Activated CD8-positive, alpha-beta T cell treated with anti-CD3 and anti-CD28 coated beads for 36 hours (primary cell): ENCODE measurements at regions of chr2 and their contacts with region 1.

Region 1: GRCh38 chr2:95121407-95122196 is at the start of gene MRPS5:
- DNase-seq: peak; percentile 90
- ATAC-seq: peak; percentile 97
- H3K4me3 Mint-ChIP-seq: peak within 1 kb of the TSS; percentile 82
- H3K27ac Mint-ChIP-seq: peak within 1 kb of the TSS; percentile 93
- H3K4me1 Mint-ChIP-seq: peaks cover 37% of the 10 kb centered on the region
- H3K27me3 Mint-ChIP-seq: no peaks in the 10 kb centered on the region
- CTCF ChIP-seq: no peak
- total RNA-seq, gene MRPS5: 93.0 to 96.1 TPM

Region 2: GRCh38 chr2:95091885-95092555 is 29.6 kb before region 1 on chr2:
- CTCF ChIA-PET with region 1: no interaction called
- POLR2A ChIA-PET with region 1: no interaction called
- intact Hi-C with region 1: no loop called
- DNase-seq: no peak
- ATAC-seq: no peak
- H3K4me3 Mint-ChIP-seq: no peak overlapping the region
- H3K27ac Mint-ChIP-seq: no peak overlapping the region
- H3K4me1 Mint-ChIP-seq: peaks cover 27% of the 10 kb centered on the region
- H3K27me3 Mint-ChIP-seq: no peaks in the 10 kb centered on the region
- CTCF ChIP-seq: no peak

Region 3: GRCh38 chr2:95159690-95160449 is 38.3 kb after region 1 on chr2 and contains the start of gene ZNF514:
- CTCF ChIA-PET with region 1: interaction called, 16 read pairs
- POLR2A ChIA-PET with region 1: interaction called, 10 read pairs
- intact Hi-C with region 1: loop called (anchors 5 kb)
- DNase-seq: peak; percentile 80
- ATAC-seq: peak; percentile 95
- H3K4me3 Mint-ChIP-seq: peak within 1 kb of the TSS; percentile 78
- H3K27ac Mint-ChIP-seq: peak within 1 kb of the TSS; percentile 88
- H3K4me1 Mint-ChIP-seq: peaks cover 23% of the 10 kb centered on the region
- H3K27me3 Mint-ChIP-seq: no peaks in the 10 kb centered on the region
- CTCF ChIP-seq: no peak
- total RNA-seq, gene ZNF514: 14.0 to 15.6 TPM

Region 4: GRCh38 chr2:95165129-95166064 is 43.8 kb after region 1 on chr2 and contains the start of gene ZNF2:
- CTCF ChIA-PET with region 1: interaction called, 16 read pairs
- POLR2A ChIA-PET with region 1: interaction called, 10 read pairs
- intact Hi-C with region 1: no loop called
- DNase-seq: peak; percentile 98
- ATAC-seq: peak; percentile 94
- H3K4me3 Mint-ChIP-seq: peak within 1 kb of the TSS; percentile 100
- H3K27ac Mint-ChIP-seq: peak within 1 kb of the TSS; percentile 96
- H3K4me1 Mint-ChIP-seq: peaks cover 25% of the 10 kb centered on the region
- H3K27me3 Mint-ChIP-seq: no peaks in the 10 kb centered on the region
- CTCF ChIP-seq: no peak
- total RNA-seq, gene ZNF2: 5.7 to 6.5 TPM

Region 5: DNA sequence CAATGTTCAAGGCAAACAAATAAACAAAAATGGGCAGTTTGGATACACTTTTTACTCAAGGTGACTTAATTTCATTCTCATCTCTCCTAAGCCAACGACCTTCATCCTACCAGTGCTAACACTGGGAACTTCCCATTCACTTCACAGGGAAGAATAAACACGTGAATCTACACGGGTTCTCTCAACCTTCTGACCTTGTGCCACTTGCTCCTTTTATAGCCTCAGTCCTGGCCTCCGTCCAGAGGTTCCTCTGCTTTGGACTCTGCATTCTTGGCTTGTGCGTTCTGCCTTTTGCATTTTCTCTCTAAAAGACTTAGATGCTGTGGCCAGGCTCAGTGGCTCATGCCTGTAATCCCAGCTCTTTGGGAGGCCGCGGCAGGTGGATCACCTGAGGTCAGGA is 57.8 kb after region 1 on chr2:
- CTCF ChIA-PET with region 1: no interaction called
- POLR2A ChIA-PET with region 1: no interaction called
- intact Hi-C with region 1: no loop called
- DNase-seq: no peak
- ATAC-seq: no peak
- H3K4me3 Mint-ChIP-seq: no peak overlapping the region
- H3K27ac Mint-ChIP-seq: no peak overlapping the region
- H3K4me1 Mint-ChIP-seq: no peaks in the 10 kb centered on the region
- H3K27me3 Mint-ChIP-seq: no peaks in the 10 kb centered on the region
- CTCF ChIP-seq: no peak